ENCODE measurements at regions of chr5 and their contacts with region 1.

Region 1: DNA sequence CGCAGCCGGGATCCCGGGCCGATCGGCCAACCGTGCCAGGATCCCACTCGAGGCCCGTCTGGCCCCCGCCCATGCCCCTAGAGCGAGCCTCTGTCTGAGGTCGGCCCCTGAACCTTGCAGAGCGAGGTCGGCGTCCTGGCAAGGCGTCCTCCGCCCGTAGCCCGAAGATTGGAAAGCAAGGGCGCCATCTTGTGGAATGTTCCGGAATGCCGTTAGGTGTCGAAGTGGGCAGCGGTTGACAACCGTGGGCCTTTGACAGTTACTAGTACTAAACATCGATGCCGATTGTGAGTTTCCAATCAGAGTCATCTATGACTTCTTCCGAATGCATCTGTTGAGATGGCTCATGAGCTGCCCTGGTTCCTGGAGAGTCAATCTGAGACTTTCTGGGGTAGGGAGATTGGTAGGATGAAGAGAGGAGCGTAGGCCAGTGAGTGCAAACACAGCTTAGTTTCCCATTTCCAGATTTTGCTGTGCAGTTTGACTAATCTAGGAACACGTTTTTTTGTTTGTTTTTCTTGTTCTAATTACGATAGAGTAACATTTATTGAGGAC is 923 bp upstream of the PLK2 start:
- DNase-seq: peak; percentile 84 to 85
- ATAC-seq: peak; percentile 79 to 85
- H3K4me3 ChIP-seq: peak overlapping the region; percentile 70 to 92 (median 81)
- H3K27ac ChIP-seq: peak overlapping the region; percentile 90 to 96 (median 93)
- H3K4me1 ChIP-seq: no peaks in the 10 kb centered on the region
- H3K27me3 ChIP-seq: no peaks in the 10 kb centered on the region
- CTCF ChIP-seq: peak; percentile 49 to 77 (median 74)
- POLR2A ChIP-seq: no peak

Region 2: GRCh38 chr5:57298295-57298984 is 1162.4 kb before region 1 on chr5:
- in situ Hi-C with region 1: loop called (anchors 5 to 10 kb)
- intact Hi-C with region 1: loop called (anchors 1 kb)
- DNase-seq: peak; percentile 53 to 68
- ATAC-seq: peak; percentile 86 to 93
- H3K4me3 ChIP-seq: peak overlapping the region in 1 of 4 donors; percentile 14
- H3K27ac ChIP-seq: no peak overlapping the region
- H3K4me1 ChIP-seq: peaks cover 2 to 6% of the 10 kb centered on the region in 2 donors
- H3K27me3 ChIP-seq: no peaks in the 10 kb centered on the region
- CTCF ChIP-seq: peak; percentile 62 to 84 (median 67)
- POLR2A ChIP-seq: no peak

Region 3: GRCh38 chr5:57650360-57651069 is 810.3 kb before region 1 on chr5:
- in situ Hi-C with region 1: no loop called
- intact Hi-C with region 1: loop called (anchors 2 kb)
- DNase-seq: peak in 1 of 2 donors; percentile 17
- ATAC-seq: peak; percentile 46 to 57
- H3K4me3 ChIP-seq: no peak overlapping the region
- H3K27ac ChIP-seq: no peak overlapping the region
- H3K4me1 ChIP-seq: peaks cover 7 to 16% of the 10 kb centered on the region in 2 donors
- H3K27me3 ChIP-seq: no peaks in the 10 kb centered on the region
- CTCF ChIP-seq: peak; percentile 39 to 62 (median 60)
- POLR2A ChIP-seq: no peak

Region 4: GRCh38 chr5:57779383-57780223 is 681.2 kb before region 1 on chr5:
- in situ Hi-C with region 1: loop called in 3 of 4 experiments (anchors 5 to 10 kb)
- intact Hi-C with region 1: loop called (anchors 1 kb)
- DNase-seq: peak; percentile 10 to 12
- ATAC-seq: peak; percentile 79 to 85
- H3K4me3 ChIP-seq: no peak overlapping the region
- H3K27ac ChIP-seq: peak overlapping the region; percentile 14 to 47 (median 28)
- H3K4me1 ChIP-seq: peaks cover 11 to 18% of the 10 kb centered on the region in 2 donors
- H3K27me3 ChIP-seq: no peaks in the 10 kb centered on the region
- CTCF ChIP-seq: peak; percentile 39 to 67 (median 62)
- POLR2A ChIP-seq: no peak

Region 5: GRCh38 chr5:57895766-57896165 is 565.0 kb before region 1 on chr5:
- in situ Hi-C with region 1: loop called (anchors 10 to 25 kb)
- intact Hi-C with region 1: no loop called
- DNase-seq: no peak
- ATAC-seq: no peak
- H3K4me3 ChIP-seq: no peak overlapping the region
- H3K27ac ChIP-seq: no peak overlapping the region
- H3K4me1 ChIP-seq: peaks cover 0 to 10% of the 10 kb centered on the region in 2 donors
- H3K27me3 ChIP-seq: no peaks in the 10 kb centered on the region
- CTCF ChIP-seq: no peak
- POLR2A ChIP-seq: no peak

Region 6: GRCh38 chr5:58294598-58295305 is 166.1 kb before region 1 on chr5:
- in situ Hi-C with region 1: no loop called
- intact Hi-C with region 1: no loop called
- DNase-seq: no peak
- ATAC-seq: peak; percentile 41 to 65
- H3K4me3 ChIP-seq: no peak overlapping the region
- H3K27ac ChIP-seq: peak overlapping the region in 3 of 4 donors; percentile 39 to 60 (median 58)
- H3K4me1 ChIP-seq: no peaks in the 10 kb centered on the region
- H3K27me3 ChIP-seq: no peaks in the 10 kb centered on the region
- CTCF ChIP-seq: no peak
- POLR2A ChIP-seq: no peak

Measured in gastrocnemius medialis (tissue), 4 donors.